CD4-positive, alpha-beta T cell (primary cell): ENCODE measurements at regions of chr12 and their contacts with region 1.

Region 1: GRCh38 chr12:66708704-66709456 is 30.0 kb upstream of the GRIP1 start:
- DNase-seq: peak in 3 of 14 experiments; percentile 36 to 46 (median 38)
- ATAC-seq: peak; percentile 85
- H3K4me3 ChIP-seq: no peak overlapping the region
- H3K4me3 Mint-ChIP-seq: peak overlapping the region; percentile 70
- H3K27ac ChIP-seq: no peak overlapping the region
- H3K27ac Mint-ChIP-seq: peak overlapping the region; percentile 73
- H3K4me1 ChIP-seq: peaks cover 3% of the 10 kb centered on the region
- H3K4me1 Mint-ChIP-seq: peaks cover 48% of the 10 kb centered on the region
- H3K27me3 ChIP-seq: no peaks in the 10 kb centered on the region
- H3K27me3 Mint-ChIP-seq: peaks cover 5% of the 10 kb centered on the region
- CTCF ChIP-seq: peak; percentile 80

Region 2: GRCh38 chr12:66688846-66689439 is 19.9 kb before region 1 on chr12:
- CTCF ChIA-PET with region 1: no interaction called
- POLR2A ChIA-PET with region 1: no interaction called
- intact Hi-C with region 1: no loop called
- DNase-seq: peak in 12 of 14 experiments; percentile 8 to 65 (median 23)
- ATAC-seq: peak; percentile 52
- H3K4me3 ChIP-seq: no peak overlapping the region
- H3K4me3 Mint-ChIP-seq: no peak overlapping the region
- H3K27ac ChIP-seq: no peak overlapping the region
- H3K27ac Mint-ChIP-seq: no peak overlapping the region
- H3K4me1 ChIP-seq: no peaks in the 10 kb centered on the region
- H3K4me1 Mint-ChIP-seq: peaks cover 3% of the 10 kb centered on the region
- H3K27me3 ChIP-seq: peaks cover 5% of the 10 kb centered on the region in 2 experiments
- H3K27me3 Mint-ChIP-seq: peaks cover 9% of the 10 kb centered on the region
- CTCF ChIP-seq: peak; percentile 61

Region 3: DNA sequence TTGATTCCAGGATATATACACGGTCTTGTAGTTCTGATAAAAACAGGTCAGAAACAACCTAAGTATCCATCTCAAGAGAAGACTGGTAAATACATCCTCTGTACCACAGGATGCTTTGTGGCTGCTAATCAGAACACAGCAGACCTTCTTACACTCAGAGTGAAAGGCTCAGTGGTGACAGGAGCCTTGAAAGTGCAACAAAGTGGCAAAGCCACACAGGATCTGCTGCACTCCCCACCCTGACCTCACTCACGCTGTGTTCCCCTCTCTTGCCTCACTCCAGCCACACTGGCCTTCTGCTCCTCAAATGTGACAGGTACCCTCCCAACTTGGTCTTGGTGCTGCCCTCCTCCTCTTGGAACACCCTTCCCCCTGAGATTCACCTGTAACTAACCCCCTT is 68.1 kb after region 1 on chr12:
- CTCF ChIA-PET with region 1: no interaction called
- POLR2A ChIA-PET with region 1: no interaction called
- intact Hi-C with region 1: loop called in 1 of 2 experiments (anchors 5 kb)
- DNase-seq: peak in 10 of 14 experiments; percentile 0 to 75 (median 24)
- ATAC-seq: peak; percentile 94
- H3K4me3 ChIP-seq: no peak overlapping the region
- H3K4me3 Mint-ChIP-seq: peak overlapping the region; percentile 25
- H3K27ac ChIP-seq: no peak overlapping the region
- H3K27ac Mint-ChIP-seq: peak overlapping the region; percentile 76
- H3K4me1 ChIP-seq: no peaks in the 10 kb centered on the region
- H3K4me1 Mint-ChIP-seq: peaks cover 24% of the 10 kb centered on the region
- H3K27me3 ChIP-seq: no peaks in the 10 kb centered on the region
- H3K27me3 Mint-ChIP-seq: no peaks in the 10 kb centered on the region
- CTCF ChIP-seq: no peak

Region 4: DNA sequence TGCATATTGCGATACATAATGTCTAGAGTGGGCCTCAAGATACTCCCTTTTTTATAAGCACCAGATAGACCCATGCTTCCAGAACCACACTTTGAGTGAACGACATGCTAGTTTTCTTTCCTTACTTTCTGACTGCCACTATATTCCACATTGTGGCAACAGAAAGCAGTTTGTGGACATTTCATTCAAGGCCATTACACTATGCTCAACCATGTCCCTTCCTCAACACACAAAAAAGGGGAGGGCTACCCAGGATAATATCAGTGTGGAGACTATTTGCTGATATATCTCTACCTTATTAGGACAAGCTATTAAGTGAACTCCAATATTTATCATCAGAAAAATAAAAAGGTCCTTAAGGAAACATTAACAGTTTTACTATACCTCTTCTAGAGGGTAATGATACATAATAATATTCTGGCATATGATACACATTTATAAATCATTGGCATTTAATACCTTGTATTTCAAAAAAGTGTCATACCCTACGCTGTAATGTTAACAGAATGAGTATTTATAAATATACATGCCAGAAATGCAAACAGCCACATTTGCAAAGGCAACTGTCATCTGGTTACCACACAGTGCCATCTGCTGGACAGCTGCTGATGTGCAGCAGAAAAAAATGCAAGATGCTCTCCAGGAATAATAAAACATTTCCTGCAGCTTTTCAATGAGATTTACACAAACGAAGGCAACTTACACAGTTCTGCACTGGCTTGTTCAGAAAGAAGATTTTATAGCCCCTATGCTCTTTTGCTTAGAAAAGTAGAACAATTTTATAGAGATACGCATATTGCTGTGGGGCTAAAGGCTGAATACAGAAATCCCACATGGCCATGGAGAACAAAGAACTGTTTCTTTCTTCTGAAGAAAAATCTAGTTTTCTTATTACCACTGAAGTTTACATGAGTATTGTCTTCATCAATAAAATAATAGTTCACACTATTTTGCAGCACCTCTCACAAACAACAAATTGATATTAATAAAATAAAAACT is 152.2 kb after region 1 on chr12:
- CTCF ChIA-PET with region 1: interaction called, 3 read pairs
- POLR2A ChIA-PET with region 1: interaction called, 3 read pairs
- intact Hi-C with region 1: loop called in 1 of 2 experiments (anchors 5 kb)
- DNase-seq: peak; percentile 39 to 78 (median 58)
- ATAC-seq: peak; percentile 62
- H3K4me3 ChIP-seq: no peak overlapping the region
- H3K4me3 Mint-ChIP-seq: no peak overlapping the region
- H3K27ac ChIP-seq: no peak overlapping the region
- H3K27ac Mint-ChIP-seq: no peak overlapping the region
- H3K4me1 ChIP-seq: no peaks in the 10 kb centered on the region
- H3K4me1 Mint-ChIP-seq: peaks cover 23% of the 10 kb centered on the region
- H3K27me3 ChIP-seq: peaks cover 0 to 1% of the 10 kb centered on the region in 2 experiments
- H3K27me3 Mint-ChIP-seq: no peaks in the 10 kb centered on the region
- CTCF ChIP-seq: peak; percentile 95

Region 5: GRCh38 chr12:66929121-66929520 is 220.2 kb after region 1 on chr12:
- CTCF ChIA-PET with region 1: no interaction called
- POLR2A ChIA-PET with region 1: no interaction called
- intact Hi-C with region 1: no loop called
- DNase-seq: peak in 2 of 14 experiments; percentile 47 to 56
- ATAC-seq: peak; percentile 73
- H3K4me3 ChIP-seq: no peak overlapping the region
- H3K4me3 Mint-ChIP-seq: no peak overlapping the region
- H3K27ac ChIP-seq: no peak overlapping the region
- H3K27ac Mint-ChIP-seq: no peak overlapping the region
- H3K4me1 ChIP-seq: no peaks in the 10 kb centered on the region
- H3K4me1 Mint-ChIP-seq: peaks cover 20% of the 10 kb centered on the region
- H3K27me3 ChIP-seq: no peaks in the 10 kb centered on the region
- H3K27me3 Mint-ChIP-seq: no peaks in the 10 kb centered on the region
- CTCF ChIP-seq: no peak